ENCODE measurements at regions of chr6 and their contacts with region 1.

Region 1: DNA sequence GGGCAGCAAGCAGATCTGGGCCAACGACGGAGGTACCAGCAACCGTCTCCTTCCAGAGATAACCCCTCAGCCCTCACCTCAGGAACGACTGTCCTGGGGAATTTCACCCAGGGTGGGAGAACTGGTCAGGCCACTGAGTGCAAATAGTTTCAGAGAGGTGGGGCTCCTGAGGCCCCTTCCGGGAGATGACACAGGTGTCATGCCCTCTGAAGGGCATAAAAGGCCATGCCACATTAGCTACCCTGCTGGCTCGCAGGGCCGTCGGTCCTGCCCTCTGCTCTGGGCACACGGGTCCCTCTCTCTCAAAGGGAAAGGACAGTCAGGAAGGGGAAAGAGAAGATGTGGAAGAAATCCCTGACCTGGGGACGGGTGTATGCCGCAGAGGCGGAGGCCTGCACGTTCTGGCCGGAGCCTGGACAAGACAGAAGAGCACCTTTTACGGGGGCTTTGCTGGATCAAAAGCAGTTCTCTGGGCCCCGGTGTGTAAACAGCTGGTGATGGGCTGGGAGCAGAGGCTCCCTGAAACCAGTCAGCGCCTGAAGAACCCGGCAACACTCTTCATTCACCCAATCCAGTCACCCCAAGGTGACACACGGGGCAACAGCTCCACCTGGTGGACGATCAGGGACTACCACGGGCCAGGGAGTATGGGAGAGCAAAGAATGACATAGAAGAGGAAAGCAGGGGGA is 6.4 kb upstream of the TAF8 start:
- DNase-seq: peak; percentile 97
- ATAC-seq: peak; percentile 42
- H3K4me3 Mint-ChIP-seq: peak overlapping the region; percentile 88
- H3K27ac Mint-ChIP-seq: peak overlapping the region; percentile 100
- H3K4me1 Mint-ChIP-seq: peaks cover 84% of the 10 kb centered on the region
- H3K27me3 Mint-ChIP-seq: no peaks in the 10 kb centered on the region

Region 2: DNA sequence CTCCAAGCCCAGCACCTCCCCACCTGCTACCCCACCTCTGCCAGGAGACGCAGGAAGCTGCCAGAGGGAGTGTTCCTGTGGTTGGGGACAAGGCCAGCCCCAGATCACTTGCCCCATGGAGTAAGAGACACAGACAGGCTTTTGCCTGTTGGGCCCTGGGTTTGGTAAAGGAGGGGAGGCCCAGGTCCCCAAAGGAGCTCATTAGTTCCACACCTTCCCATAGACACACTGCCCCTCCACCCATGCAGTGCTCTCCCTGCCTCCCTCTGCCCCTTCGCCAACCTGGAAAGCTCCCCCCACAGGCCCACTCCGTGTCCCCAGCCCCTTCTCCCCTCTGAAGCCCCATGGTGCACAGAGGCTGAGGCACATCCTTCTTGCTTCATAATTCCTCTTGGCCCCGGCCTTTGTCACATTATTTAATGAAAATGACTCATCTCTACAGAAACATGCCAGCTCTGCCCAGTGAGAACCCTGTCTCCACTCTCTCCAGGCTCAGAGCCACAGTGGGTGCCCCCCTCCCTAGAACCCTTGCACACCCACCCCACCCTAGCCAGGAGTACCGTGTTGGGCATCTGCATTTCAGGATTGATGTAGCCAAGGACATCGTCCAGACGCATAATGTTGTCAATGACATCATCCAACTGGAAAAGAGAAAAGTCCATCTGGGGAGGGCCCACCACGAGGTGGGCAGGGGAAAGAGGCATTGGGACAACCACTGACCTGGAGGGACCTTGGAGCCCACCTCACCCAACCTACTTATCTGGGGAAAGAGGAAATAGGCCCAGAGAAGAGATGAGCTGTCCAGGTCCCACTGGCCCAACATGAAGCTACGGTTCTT is 354.5 kb before region 1 on chr6:
- CTCF ChIA-PET with region 1: no interaction called
- POLR2A ChIA-PET with region 1: no interaction called
- intact Hi-C with region 1: no loop called
- DNase-seq: no peak
- ATAC-seq: no peak
- H3K4me3 Mint-ChIP-seq: no peak overlapping the region
- H3K27ac Mint-ChIP-seq: peak overlapping the region; percentile 1
- H3K4me1 Mint-ChIP-seq: peaks cover 3% of the 10 kb centered on the region
- H3K27me3 Mint-ChIP-seq: no peaks in the 10 kb centered on the region

Region 3: DNA sequence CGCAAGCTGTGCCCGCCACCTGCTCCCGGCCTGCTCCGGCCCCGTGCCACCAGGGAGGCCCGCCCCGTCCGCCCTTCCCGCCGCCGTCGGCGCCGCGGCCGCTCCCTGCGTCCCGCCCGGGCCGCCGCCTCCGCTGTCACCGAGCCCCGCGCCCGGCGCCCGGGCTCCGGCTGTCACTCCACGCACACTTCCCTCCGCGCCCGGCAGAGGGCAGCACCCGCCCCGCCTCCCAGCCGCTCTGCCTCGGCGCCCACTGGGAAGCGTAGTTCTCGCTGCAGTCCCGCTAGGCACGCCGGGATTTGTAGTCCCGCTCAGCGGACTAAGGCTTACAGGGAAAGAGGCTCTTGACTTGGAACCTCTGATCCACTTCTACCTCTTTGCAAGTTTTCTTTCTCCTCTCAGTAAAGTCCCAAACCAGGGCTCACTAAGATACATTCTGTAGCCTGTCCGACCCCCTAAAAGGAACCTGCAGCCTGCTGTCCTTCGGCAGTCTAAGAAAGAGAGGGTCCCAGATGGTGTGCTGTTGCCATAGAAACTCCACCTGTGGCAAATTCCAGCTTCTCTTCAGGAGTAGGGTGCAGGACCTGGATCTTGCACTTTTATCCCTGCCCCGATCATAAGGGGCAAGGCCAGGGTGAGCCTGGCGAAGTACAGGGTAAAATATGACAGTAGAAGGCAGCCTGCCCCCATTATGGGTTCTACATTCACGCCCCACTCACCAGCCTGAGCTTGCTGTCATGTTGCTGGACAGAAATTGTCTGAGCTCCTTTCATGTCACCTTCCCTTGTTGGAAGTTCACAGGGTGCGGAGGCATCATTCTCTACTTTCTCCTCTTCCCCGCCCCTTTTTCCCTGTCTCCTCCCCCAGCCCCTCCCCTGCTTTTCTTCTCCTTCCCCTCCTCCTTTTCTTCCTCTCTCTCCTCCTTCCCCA is 308.2 kb before region 1 on chr6 and contains the start of gene TFEB:
- CTCF ChIA-PET with region 1: no interaction called
- POLR2A ChIA-PET with region 1: no interaction called
- intact Hi-C with region 1: loop called in 1 of 2 experiments (anchors 2 kb)
- DNase-seq: peak; percentile 97
- ATAC-seq: peak; percentile 76
- H3K4me3 Mint-ChIP-seq: peak within 1 kb of the TSS; percentile 74
- H3K27ac Mint-ChIP-seq: peak within 1 kb of the TSS; percentile 42
- H3K4me1 Mint-ChIP-seq: peaks cover 29% of the 10 kb centered on the region
- H3K27me3 Mint-ChIP-seq: no peaks in the 10 kb centered on the region
- total RNA-seq, gene TFEB: 8.5 to 9.2 TPM

Region 4: GRCh38 chr6:41846666-41847237 is 197.2 kb before region 1 on chr6:
- CTCF ChIA-PET with region 1: interaction called, 57 read pairs
- POLR2A ChIA-PET with region 1: no interaction called
- intact Hi-C with region 1: loop called (anchors 1 kb)
- DNase-seq: peak; percentile 67
- ATAC-seq: peak; percentile 85
- H3K4me3 Mint-ChIP-seq: no peak overlapping the region
- H3K27ac Mint-ChIP-seq: no peak overlapping the region
- H3K4me1 Mint-ChIP-seq: peaks cover 5% of the 10 kb centered on the region
- H3K27me3 Mint-ChIP-seq: no peaks in the 10 kb centered on the region

Region 5: GRCh38 chr6:41920921-41921711 is 122.8 kb before region 1 on chr6 and contains the starts of genes BYSL and MED20:
- CTCF ChIA-PET with region 1: interaction called, 189 read pairs
- POLR2A ChIA-PET with region 1: interaction called, 5 read pairs
- intact Hi-C with region 1: loop called (anchors 1 kb)
- DNase-seq: peak; percentile 96
- ATAC-seq: peak; percentile 83
- H3K4me3 Mint-ChIP-seq: peak within 1 kb of the TSS; percentile 99
- H3K27ac Mint-ChIP-seq: peak within 1 kb of the TSS; percentile 98
- H3K4me1 Mint-ChIP-seq: peaks cover 49% of the 10 kb centered on the region
- H3K27me3 Mint-ChIP-seq: no peaks in the 10 kb centered on the region
- total RNA-seq, gene BYSL: 51.6 to 56.0 TPM
- total RNA-seq, gene MED20: 19.4 to 21.6 TPM

Region 6: DNA sequence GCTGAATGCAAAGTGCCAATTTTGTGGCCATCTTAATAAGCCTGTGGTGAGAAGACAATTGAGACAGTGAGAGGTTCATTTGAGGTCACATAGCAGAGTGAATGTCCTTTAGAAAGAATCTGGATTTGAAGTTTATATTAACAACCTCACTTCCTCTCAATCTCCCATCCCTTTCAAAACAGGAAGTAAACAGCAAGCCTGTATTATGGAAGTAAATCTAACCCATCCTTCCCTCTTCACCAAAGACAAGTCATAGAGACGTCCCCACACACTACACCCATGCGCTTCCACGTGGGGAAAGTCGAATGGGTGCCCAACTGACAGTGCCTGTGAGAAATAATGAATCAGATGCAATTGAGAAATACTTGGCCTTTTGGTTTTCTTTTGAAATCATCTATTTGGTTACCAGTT is 73.5 kb before region 1 on chr6:
- CTCF ChIA-PET with region 1: interaction called, 14 read pairs
- POLR2A ChIA-PET with region 1: interaction called, 3 read pairs
- intact Hi-C with region 1: no loop called
- DNase-seq: peak; percentile 84
- ATAC-seq: peak; percentile 85
- H3K4me3 Mint-ChIP-seq: peak overlapping the region; percentile 45
- H3K27ac Mint-ChIP-seq: peak overlapping the region; percentile 93
- H3K4me1 Mint-ChIP-seq: peaks cover 89% of the 10 kb centered on the region
- H3K27me3 Mint-ChIP-seq: no peaks in the 10 kb centered on the region

Region 7: DNA sequence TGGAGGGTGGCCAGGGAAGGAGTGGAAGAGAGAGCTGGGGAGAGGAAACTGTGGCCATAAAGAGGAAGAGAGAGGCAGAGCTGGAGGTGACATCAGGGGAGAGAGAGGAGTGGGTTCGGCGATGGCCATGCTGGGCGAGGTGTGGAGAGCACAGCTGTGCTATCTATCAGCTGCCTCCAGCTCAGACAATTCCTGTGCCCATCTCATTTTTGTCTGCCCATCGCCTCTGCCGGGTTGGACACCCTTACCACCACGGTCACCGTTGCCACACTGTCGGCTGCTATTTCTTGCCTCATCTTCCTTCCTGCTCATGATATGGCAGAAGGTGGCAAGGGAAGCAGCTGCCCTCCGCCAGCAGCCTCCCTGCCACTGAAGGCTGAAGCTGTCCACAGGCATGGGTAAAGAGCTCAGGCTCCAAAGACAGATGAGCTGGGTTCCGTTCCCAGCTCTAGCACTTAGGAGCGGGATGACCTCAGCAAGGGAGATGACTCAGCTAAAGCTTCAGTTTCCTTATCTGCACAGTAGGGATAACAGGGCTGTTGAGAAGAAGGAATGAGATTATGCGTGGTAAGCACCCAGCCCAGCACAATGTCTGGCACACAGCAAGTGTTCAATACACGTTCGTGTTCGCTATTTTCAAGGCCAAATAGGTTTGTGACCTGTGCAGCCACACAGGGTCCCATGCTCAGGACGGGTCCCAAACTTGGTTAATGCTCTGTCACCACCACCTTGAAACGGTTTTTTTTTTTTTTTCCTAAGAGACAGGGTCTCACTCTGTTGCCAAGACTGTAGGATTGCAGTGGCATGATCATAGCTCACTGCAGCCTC is 15.5 kb before region 1 on chr6:
- CTCF ChIA-PET with region 1: interaction called, 18 read pairs
- POLR2A ChIA-PET with region 1: interaction called, 11 read pairs
- intact Hi-C with region 1: loop called in 1 of 2 experiments (anchors 1 kb)
- DNase-seq: peak; percentile 60
- ATAC-seq: peak; percentile 48
- H3K4me3 Mint-ChIP-seq: peak overlapping the region; percentile 74
- H3K27ac Mint-ChIP-seq: peak overlapping the region; percentile 99
- H3K4me1 Mint-ChIP-seq: peaks cover 94% of the 10 kb centered on the region
- H3K27me3 Mint-ChIP-seq: no peaks in the 10 kb centered on the region

Region 8: GRCh38 chr6:42175860-42176259 is 131.9 kb after region 1 on chr6:
- CTCF ChIA-PET with region 1: no interaction called
- POLR2A ChIA-PET with region 1: no interaction called
- intact Hi-C with region 1: no loop called
- DNase-seq: peak; percentile 21
- ATAC-seq: no peak
- H3K4me3 Mint-ChIP-seq: no peak overlapping the region
- H3K27ac Mint-ChIP-seq: no peak overlapping the region
- H3K4me1 Mint-ChIP-seq: peaks cover 11% of the 10 kb centered on the region
- H3K27me3 Mint-ChIP-seq: peaks cover 5% of the 10 kb centered on the region

Measured in activated CD4-positive, alpha-beta T cell treated with anti-CD3 and anti-CD28 coated beads for 36 hours (primary cell).